OCI-LY7 (cell line): ENCODE measurements at regions of chr7 and their contacts with region 1.

Region 1: GRCh38 chr7:150356265-150356897 is 12.2 kb upstream of the REPIN1 start:
- DNase-seq: peak; percentile 60
- H3K4me3 ChIP-seq: no peak overlapping the region
- H3K27ac ChIP-seq: no peak overlapping the region
- H3K4me1 ChIP-seq: peaks cover 20% of the 10 kb centered on the region
- CTCF ChIP-seq: peak; percentile 89

Region 2: DNA sequence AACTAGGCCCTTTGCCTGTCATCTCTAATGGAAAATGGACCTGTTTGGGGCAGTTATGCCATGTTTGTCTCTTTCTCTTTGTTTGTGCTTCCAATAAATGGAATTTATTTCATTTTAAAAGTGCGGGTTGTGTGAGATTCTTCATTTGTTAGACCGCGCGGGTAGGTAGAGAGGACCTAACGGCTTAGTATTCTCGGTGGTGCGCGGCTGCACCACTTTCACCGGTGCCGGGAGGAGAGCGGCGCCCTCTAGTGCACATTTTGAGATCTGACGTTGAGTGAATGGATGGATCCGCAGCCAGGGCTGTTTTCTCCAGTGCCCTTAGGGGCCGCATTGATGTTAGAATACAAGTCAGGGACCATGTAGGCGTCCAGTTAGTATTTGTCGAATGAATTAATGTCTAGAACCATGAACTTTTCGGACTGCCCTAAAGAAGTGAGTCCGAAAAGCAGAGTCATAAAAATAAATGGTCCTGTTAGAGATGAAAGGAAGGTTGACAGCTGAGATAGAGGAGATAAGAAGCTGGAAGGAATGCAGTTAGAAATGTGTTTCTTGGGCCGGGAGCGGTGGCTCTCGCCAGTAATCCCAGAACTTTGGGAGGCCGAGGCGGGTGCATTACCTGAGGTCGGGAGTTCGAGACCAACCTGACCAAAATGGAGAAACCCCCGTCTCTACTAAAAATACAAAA is 64.8 kb after region 1 on chr7:
- CTCF ChIA-PET with region 1: no interaction called
- POLR2A ChIA-PET with region 1: no interaction called
- intact Hi-C with region 1: loop called (anchors 1 kb)
- DNase-seq: peak; percentile 82
- H3K4me3 ChIP-seq: no peak overlapping the region
- H3K27ac ChIP-seq: no peak overlapping the region
- H3K4me1 ChIP-seq: peaks cover 4% of the 10 kb centered on the region
- CTCF ChIP-seq: peak; percentile 91

Region 3: GRCh38 chr7:151727579-151728285 is 1371.4 kb after region 1 on chr7:
- CTCF ChIA-PET with region 1: no interaction called
- POLR2A ChIA-PET with region 1: no interaction called
- intact Hi-C with region 1: no loop called
- DNase-seq: no peak
- H3K4me3 ChIP-seq: no peak overlapping the region
- H3K27ac ChIP-seq: no peak overlapping the region
- H3K4me1 ChIP-seq: no peaks in the 10 kb centered on the region
- CTCF ChIP-seq: no peak